PC-3 (cell line): ENCODE measurements at regions of chr9 and their contacts with region 1.

Region 1: DNA sequence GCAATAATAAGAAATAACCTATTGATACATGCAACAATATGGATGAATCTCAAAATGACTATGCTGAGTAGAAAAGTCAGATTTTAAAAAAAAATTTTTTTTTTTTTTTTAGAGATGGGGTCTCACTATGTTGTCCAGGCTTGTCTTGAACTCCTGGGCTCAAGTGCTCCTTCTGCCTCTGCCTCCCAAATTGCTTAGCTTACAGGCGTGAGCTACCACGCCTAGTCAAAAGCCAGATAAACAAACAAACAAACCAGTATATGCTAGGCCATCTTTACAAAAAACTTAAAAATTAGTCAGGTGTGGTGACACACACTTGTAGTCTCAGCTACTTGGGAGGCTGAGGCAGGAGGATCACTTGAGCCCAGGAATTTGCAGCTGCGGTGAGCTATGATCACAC is 79.0 kb downstream of the MED27 start:
- DNase-seq: no peak
- ATAC-seq: no peak
- H3K4me3 ChIP-seq: no peak overlapping the region
- H3K27ac ChIP-seq: peak overlapping the region; percentile 85
- H3K4me1 ChIP-seq: peaks cover 17% of the 10 kb centered on the region
- H3K27me3 ChIP-seq: no peaks in the 10 kb centered on the region
- CTCF ChIP-seq: no peak

Region 2: GRCh38 chr9:132018957-132019405 is 18.3 kb after region 1 on chr9:
- CTCF ChIA-PET with region 1: interaction called, 12 read pairs
- POLR2A ChIA-PET with region 1: no interaction called
- intact Hi-C with region 1: no loop called
- DNase-seq: no peak
- ATAC-seq: no peak
- H3K4me3 ChIP-seq: no peak overlapping the region
- H3K27ac ChIP-seq: no peak overlapping the region
- H3K4me1 ChIP-seq: peaks cover 12% of the 10 kb centered on the region; the same call in 1 of the 2 replicates
- H3K27me3 ChIP-seq: no peaks in the 10 kb centered on the region
- CTCF ChIP-seq: no peak

Region 3: GRCh38 chr9:132099741-132100407 is 99.2 kb after region 1 on chr9:
- CTCF ChIA-PET with region 1: no interaction called
- POLR2A ChIA-PET with region 1: no interaction called
- intact Hi-C with region 1: no loop called
- DNase-seq: peak; percentile 49
- ATAC-seq: no peak; the same call in 1 of the 2 replicates
- H3K4me3 ChIP-seq: no peak overlapping the region
- H3K27ac ChIP-seq: peak overlapping the region; percentile 34; the same call in 1 of the 2 replicates
- H3K4me1 ChIP-seq: peaks cover 6% of the 10 kb centered on the region
- H3K27me3 ChIP-seq: no peaks in the 10 kb centered on the region
- CTCF ChIP-seq: no peak